ENCODE measurements at regions of chr11 and their contacts with region 1.

Region 1: DNA sequence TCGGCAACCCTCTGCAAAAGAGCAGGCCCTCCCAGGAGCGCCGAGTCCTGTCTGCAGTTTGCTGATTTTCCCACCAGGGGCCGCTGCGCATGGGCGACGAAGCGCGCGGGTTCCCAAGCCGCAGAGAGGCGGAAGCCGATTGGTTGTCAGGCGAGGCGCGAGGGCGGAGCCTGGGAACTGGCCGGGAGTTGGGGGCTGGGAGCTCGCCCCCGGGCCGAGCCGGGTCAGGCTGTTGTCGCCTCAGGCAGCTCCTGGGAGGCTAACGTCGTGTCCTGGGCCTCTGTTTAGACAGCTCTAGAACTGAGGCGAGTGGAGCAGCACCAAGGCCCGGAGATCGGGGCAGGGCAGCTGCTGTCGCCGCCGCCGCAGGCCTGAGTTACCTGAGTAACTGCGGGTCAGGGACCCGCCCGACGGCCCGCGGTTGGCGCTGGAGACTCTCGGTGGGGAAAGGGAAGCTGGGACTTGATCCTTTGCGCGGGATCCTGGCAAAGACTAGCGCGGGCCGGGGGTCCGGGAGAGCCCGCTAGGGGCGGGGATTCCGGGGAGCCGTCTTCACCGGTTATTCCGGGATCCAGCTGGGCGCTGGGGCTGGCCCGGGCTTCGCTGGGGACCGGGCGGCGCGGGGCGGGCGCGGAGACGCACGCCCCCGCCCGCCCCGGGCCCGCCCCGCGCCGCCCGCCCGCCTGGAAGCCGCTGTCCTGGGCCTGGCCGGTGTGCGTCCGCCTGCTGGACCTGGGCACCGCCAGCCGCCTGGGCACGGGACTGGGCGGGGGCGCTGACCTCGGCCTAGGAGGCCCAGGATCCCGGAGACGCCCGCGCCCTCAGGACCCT is at the start of gene STIM1:
- DNase-seq: peak; percentile 99
- ATAC-seq: peak; percentile 70
- H3K4me3 Mint-ChIP-seq: peak within 1 kb of the TSS; percentile 99
- H3K27ac Mint-ChIP-seq: peak within 1 kb of the TSS; percentile 99
- H3K4me1 Mint-ChIP-seq: peaks cover 50% of the 10 kb centered on the region
- H3K27me3 Mint-ChIP-seq: no peaks in the 10 kb centered on the region
- total RNA-seq, gene STIM1: 98.8 to 101 TPM

Region 2: GRCh38 chr11:2511421-2512369 is 1343.5 kb before region 1 on chr11:
- POLR2A ChIA-PET with region 1: no interaction called
- DNase-seq: peak; percentile 21
- ATAC-seq: no peak
- H3K4me3 Mint-ChIP-seq: no peak overlapping the region
- H3K27ac Mint-ChIP-seq: no peak overlapping the region
- H3K4me1 Mint-ChIP-seq: peaks cover 13% of the 10 kb centered on the region
- H3K27me3 Mint-ChIP-seq: no peaks in the 10 kb centered on the region

Region 3: GRCh38 chr11:3686751-3687150 is 168.4 kb before region 1 on chr11:
- POLR2A ChIA-PET with region 1: no interaction called
- DNase-seq: no peak
- ATAC-seq: no peak
- H3K4me3 Mint-ChIP-seq: no peak overlapping the region
- H3K27ac Mint-ChIP-seq: no peak overlapping the region
- H3K4me1 Mint-ChIP-seq: peaks cover 4% of the 10 kb centered on the region
- H3K27me3 Mint-ChIP-seq: no peaks in the 10 kb centered on the region

Region 4: GRCh38 chr11:3764266-3764665 is 90.9 kb before region 1 on chr11:
- POLR2A ChIA-PET with region 1: no interaction called
- DNase-seq: no peak
- ATAC-seq: no peak
- H3K4me3 Mint-ChIP-seq: no peak overlapping the region
- H3K27ac Mint-ChIP-seq: no peak overlapping the region
- H3K4me1 Mint-ChIP-seq: peaks cover 2% of the 10 kb centered on the region
- H3K27me3 Mint-ChIP-seq: no peaks in the 10 kb centered on the region

Region 5: GRCh38 chr11:3841426-3842350 is 13.5 kb before region 1 on chr11:
- POLR2A ChIA-PET with region 1: interaction called, 254 read pairs
- DNase-seq: peak; percentile 90
- ATAC-seq: peak; percentile 79
- H3K4me3 Mint-ChIP-seq: peak overlapping the region; percentile 90
- H3K27ac Mint-ChIP-seq: peak overlapping the region; percentile 98
- H3K4me1 Mint-ChIP-seq: peaks cover 40% of the 10 kb centered on the region
- H3K27me3 Mint-ChIP-seq: no peaks in the 10 kb centered on the region

Region 6: GRCh38 chr11:3880724-3881123 is 25.5 kb after region 1 on chr11:
- POLR2A ChIA-PET with region 1: interaction called, 11 read pairs
- DNase-seq: no peak
- ATAC-seq: peak; percentile 17
- H3K4me3 Mint-ChIP-seq: no peak overlapping the region
- H3K27ac Mint-ChIP-seq: peak overlapping the region; percentile 37
- H3K4me1 Mint-ChIP-seq: peaks cover 55% of the 10 kb centered on the region
- H3K27me3 Mint-ChIP-seq: no peaks in the 10 kb centered on the region

Region 7: DNA sequence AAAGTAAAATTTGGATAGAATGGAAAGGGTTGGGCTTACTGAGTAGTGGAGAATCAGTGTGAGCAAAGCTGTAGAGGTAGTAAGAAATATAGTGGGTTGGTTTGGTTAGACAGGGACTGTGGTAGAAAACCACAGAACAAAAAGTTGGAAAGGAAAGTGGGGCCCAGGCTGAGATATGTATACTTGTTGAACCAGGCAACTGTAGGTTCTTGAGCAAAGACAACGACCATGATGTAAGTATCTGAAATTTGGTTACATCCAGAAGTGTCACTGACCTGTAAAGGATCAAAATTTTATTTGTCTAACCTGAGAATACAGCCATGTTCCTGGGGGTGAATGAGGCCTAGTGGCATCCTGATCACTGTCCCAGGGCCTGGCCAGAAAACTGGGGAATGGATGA is 114.4 kb after region 1 on chr11:
- POLR2A ChIA-PET with region 1: interaction called, 13 read pairs
- DNase-seq: no peak
- ATAC-seq: peak; percentile 91
- H3K4me3 Mint-ChIP-seq: peak overlapping the region; percentile 59
- H3K27ac Mint-ChIP-seq: peak overlapping the region; percentile 87
- H3K4me1 Mint-ChIP-seq: peaks cover 42% of the 10 kb centered on the region
- H3K27me3 Mint-ChIP-seq: no peaks in the 10 kb centered on the region

Region 8: DNA sequence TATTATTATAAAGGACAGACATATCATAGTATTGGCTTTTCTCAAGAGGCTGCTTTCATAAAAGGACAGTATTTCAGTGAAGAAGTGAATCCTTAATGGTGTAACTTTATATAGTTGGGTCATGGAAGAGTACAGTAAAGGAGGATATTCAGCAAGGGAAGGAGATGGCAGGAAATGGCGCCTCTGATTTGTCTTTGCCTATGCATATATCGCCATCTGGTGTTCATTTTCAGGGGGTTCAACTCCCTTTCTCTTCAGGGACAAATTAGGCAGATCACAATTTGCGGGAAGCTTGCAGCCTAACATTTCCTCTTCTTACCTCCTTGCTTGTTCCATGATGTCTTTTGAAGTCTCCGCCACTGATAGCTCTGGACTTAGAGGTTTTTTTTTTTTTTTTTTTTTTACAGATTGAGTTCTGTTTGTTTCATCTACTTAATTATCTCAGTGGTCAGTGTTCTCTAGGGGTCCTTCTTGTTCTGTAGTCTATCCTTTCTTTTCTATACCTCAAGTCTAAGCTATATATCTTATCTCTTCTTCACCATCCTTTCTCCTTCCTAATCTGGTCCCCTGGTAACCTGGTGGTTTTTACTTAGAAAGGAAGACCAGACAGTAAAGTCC is 217.6 kb after region 1 on chr11:
- POLR2A ChIA-PET with region 1: interaction called, 40 read pairs
- DNase-seq: no peak
- ATAC-seq: peak; percentile 66
- H3K4me3 Mint-ChIP-seq: no peak overlapping the region
- H3K27ac Mint-ChIP-seq: no peak overlapping the region
- H3K4me1 Mint-ChIP-seq: peaks cover 31% of the 10 kb centered on the region
- H3K27me3 Mint-ChIP-seq: no peaks in the 10 kb centered on the region

Measured in activated naive CD8-positive, alpha-beta T cell treated with anti-CD3 and anti-CD28 coated beads, Interleukin-2, amount 10 ng/mL, durations not matched to agents 7 days and 5 days (primary cell).